ENCODE measurements at regions of chr22 and their contacts with region 1.

Region 1: GRCh38 chr22:40636380-40637182 is at the start of gene MRTFA:
- DNase-seq: peak; percentile 87 to 99 (median 92)
- ATAC-seq: peak; percentile 94
- H3K4me3 ChIP-seq: peak within 1 kb of the TSS; percentile 86
- H3K27ac ChIP-seq: peak within 1 kb of the TSS; percentile 94
- H3K4me1 ChIP-seq: peaks cover 13 to 23% of the 10 kb centered on the region in 2 experiments; a peak in 4 of 5 replicates
- H3K27me3 ChIP-seq: no peaks in the 10 kb centered on the region
- CTCF ChIP-seq: no peak
- EP300 ChIP-seq: 0 out of 2 replicates have a peak, but pooled peaks have one; percentile 3
- POLR2A ChIP-seq: peak; percentile 84
- RAD21 ChIP-seq: 0 out of 4 replicates have a peak, but pooled peaks of 1 of the 2 experiments have one; percentile 6
- polyA plus RNA-seq, gene MRTFA: 0.84 to 0.97 TPM

Region 2: DNA sequence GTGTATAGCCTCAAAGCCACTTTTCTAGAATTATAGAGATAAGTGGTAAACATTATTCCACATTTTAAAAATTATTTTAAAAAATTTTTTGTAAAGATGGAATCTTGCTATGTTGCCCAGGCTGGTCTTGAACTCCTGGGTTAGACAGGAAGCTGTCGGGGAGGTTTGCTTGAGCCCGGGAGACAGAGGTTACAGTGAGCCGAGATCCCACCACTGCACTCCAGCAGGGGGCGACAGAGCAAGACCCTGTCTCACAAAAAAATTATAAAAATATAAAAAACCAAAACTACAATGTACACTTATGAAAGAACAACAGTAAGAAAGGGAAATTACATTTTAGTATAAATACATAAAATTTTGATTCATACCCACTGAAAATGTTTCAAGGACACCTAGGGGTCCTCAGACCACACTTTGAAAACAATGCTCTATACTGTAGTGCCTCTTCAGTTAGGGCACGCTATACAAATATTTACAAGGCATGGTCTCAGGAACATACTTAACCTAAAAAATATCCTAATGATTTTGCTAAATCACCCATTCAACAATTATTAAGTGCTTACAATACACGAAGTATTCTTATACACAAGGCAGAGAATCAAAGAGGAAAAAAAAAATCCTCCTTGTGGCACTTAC is 111.2 kb before region 1 on chr22:
- CTCF ChIA-PET with region 1: no interaction called
- POLR2A ChIA-PET with region 1: interaction called, 3 read pairs
- in situ Hi-C with region 1: loop called (anchors 5 kb)
- intact Hi-C with region 1: no loop called
- DNase-seq: peak in 3 of 4 experiments; percentile 20 to 66 (median 26)
- ATAC-seq: peak; percentile 86
- H3K4me3 ChIP-seq: no peak overlapping the region
- H3K27ac ChIP-seq: no peak overlapping the region
- H3K4me1 ChIP-seq: peaks cover 0 to 6% of the 10 kb centered on the region in 2 experiments; a peak in 1 of 5 replicates
- H3K27me3 ChIP-seq: no peaks in the 10 kb centered on the region
- CTCF ChIP-seq: peak; percentile 62 to 71 (median 70)
- EP300 ChIP-seq: no peak
- POLR2A ChIP-seq: no peak
- RAD21 ChIP-seq: peak; percentile 41 to 57; a peak in 3 of 4 replicates

Region 3: GRCh38 chr22:40651563-40652501 is 15.3 kb after region 1 on chr22:
- CTCF ChIA-PET with region 1: no interaction called
- POLR2A ChIA-PET with region 1: interaction called, 20 read pairs
- in situ Hi-C with region 1: no loop called
- intact Hi-C with region 1: no loop called
- DNase-seq: peak; percentile 87 to 95 (median 89)
- ATAC-seq: peak; percentile 97
- H3K4me3 ChIP-seq: peak overlapping the region; percentile 81
- H3K27ac ChIP-seq: peak overlapping the region; percentile 100
- H3K4me1 ChIP-seq: peaks cover 18 to 36% of the 10 kb centered on the region in 2 experiments
- H3K27me3 ChIP-seq: no peaks in the 10 kb centered on the region
- CTCF ChIP-seq: no peak
- EP300 ChIP-seq: peak; percentile 19; the same call in 1 of the 2 replicates
- POLR2A ChIP-seq: peak; percentile 99
- RAD21 ChIP-seq: no peak

Measured in K562 (cell line).